ENCODE measurements at regions of chr3 and their contacts with region 1.

Region 1: GRCh38 chr3:32510075-32510724 is 7.5 kb upstream of the CMTM6 start:
- DNase-seq: peak; percentile 86
- H3K4me3 Mint-ChIP-seq: no peak overlapping the region
- H3K27ac Mint-ChIP-seq: no peak overlapping the region
- H3K4me1 Mint-ChIP-seq: peaks cover 2% of the 10 kb centered on the region
- H3K27me3 Mint-ChIP-seq: no peaks in the 10 kb centered on the region

Region 2: GRCh38 chr3:32570421-32571191 is 60.4 kb after region 1 on chr3 and contains the start of gene DYNC1LI1:
- CTCF ChIA-PET with region 1: interaction called, 6 read pairs
- intact Hi-C with region 1: loop called (anchors 2 kb)
- DNase-seq: peak; percentile 94
- H3K4me3 Mint-ChIP-seq: peak within 1 kb of the TSS; percentile 88
- H3K27ac Mint-ChIP-seq: peak within 1 kb of the TSS; percentile 88
- H3K4me1 Mint-ChIP-seq: peaks cover 19% of the 10 kb centered on the region
- H3K27me3 Mint-ChIP-seq: no peaks in the 10 kb centered on the region
- total RNA-seq, gene DYNC1LI1: 29.8 to 33.1 TPM

Region 3: GRCh38 chr3:32593903-32594525 is 83.8 kb after region 1 on chr3:
- CTCF ChIA-PET with region 1: no interaction called
- intact Hi-C with region 1: loop called (anchors 1 kb)
- DNase-seq: no peak
- H3K4me3 Mint-ChIP-seq: no peak overlapping the region
- H3K27ac Mint-ChIP-seq: no peak overlapping the region
- H3K4me1 Mint-ChIP-seq: no peaks in the 10 kb centered on the region
- H3K27me3 Mint-ChIP-seq: peaks cover 2% of the 10 kb centered on the region

Region 4: DNA sequence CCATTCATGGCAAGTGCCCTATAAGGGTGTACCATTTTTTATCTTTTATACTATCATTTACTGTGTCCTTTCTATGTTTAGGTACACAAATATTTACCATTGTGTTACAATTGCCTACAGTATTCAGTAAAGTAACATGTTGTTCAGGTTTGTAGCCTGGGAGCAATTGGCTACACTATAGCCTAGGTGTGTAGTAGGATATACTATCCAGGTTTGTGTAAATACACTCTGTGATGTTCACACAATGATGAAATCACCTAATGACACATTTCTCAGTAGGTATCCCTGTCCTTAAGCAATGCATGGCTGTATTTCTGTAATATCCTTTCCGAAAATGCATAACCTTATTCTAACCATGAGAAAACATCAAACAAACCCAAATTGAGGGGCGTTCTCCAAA is 156.9 kb after region 1 on chr3:
- CTCF ChIA-PET with region 1: interaction called, 12 read pairs
- intact Hi-C with region 1: loop called (anchors 1 kb)
- DNase-seq: no peak
- H3K4me3 Mint-ChIP-seq: no peak overlapping the region
- H3K27ac Mint-ChIP-seq: no peak overlapping the region
- H3K4me1 Mint-ChIP-seq: no peaks in the 10 kb centered on the region
- H3K27me3 Mint-ChIP-seq: no peaks in the 10 kb centered on the region

Region 5: DNA sequence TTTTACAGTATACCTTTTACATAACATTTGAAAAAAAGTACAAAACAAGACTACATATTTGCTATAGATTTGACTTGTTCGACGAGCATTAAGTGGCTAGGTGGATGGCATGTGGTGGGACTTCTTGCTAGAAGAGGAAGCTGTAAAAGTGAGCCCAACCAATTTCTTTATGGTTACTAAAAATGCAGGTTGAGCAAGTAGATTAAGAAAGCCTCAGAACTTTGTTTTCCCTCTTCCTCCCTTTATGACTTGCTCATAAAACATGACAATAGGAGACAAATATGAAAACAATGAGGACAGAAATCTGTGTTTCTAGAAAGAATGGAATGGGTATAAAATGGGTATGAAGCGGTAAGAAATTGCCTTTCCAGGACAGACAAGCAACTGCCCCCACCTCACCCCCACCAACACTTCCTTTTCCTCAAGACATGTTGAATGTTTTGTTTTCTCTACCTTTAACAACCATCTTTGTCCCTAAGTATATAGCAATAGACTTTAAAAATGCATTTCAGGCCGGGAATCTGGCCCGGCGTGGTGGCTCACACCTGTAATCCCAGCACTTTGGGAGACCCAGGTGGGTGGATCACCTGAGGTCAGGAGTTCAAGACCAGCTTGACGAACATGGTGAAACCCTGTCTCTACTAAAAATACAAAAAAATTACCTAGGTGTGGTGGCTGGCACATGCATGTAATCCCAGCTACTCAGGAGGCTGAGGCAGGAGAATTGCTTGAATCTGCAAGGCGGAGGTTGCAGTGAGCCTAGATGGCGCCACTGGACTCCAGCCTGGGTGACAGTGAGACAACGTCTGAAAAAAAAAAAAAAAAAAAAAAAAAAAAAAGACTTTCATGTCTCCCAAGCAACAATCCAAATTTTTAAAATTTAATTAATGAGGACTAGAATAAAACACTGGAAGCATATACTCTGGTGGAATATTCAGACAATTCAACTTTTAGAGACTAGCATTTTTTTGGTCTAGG is 391.5 kb after region 1 on chr3:
- CTCF ChIA-PET with region 1: no interaction called
- intact Hi-C with region 1: loop called (anchors 2 kb)
- DNase-seq: peak; percentile 66
- H3K4me3 Mint-ChIP-seq: peak overlapping the region; percentile 43
- H3K27ac Mint-ChIP-seq: no peak overlapping the region
- H3K4me1 Mint-ChIP-seq: peaks cover 2% of the 10 kb centered on the region
- H3K27me3 Mint-ChIP-seq: peaks cover 3% of the 10 kb centered on the region

Region 6: DNA sequence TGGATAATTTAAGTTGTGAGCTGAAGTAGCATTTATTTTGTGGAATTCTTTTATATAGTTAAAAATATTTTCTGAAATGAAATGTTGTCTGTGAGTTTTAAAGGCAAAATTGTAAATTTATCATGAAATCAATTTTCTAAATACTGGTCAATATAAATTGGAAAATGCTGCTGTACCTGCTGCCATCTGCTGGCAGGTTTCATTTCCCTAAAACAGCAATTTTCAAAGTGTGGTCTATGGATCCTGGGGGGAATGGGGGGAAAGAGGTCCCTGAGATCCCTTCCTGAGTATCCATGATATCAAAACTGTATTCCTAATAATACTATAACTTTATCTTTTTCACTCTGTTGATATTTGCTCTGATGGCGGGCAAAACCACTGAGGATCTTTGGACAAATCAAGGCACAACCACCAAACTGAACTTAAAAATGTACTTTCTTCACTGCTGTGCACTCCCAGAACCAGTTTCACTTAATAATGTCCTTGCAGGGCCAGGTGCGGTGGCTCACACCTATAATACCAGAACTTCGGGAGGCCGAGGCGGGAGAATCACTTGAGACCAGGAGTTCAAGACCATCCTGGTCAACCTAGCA is 424.0 kb after region 1 on chr3:
- CTCF ChIA-PET with region 1: interaction called, 3 read pairs
- intact Hi-C with region 1: loop called (anchors 1 kb)
- DNase-seq: peak; percentile 52
- H3K4me3 Mint-ChIP-seq: no peak overlapping the region
- H3K27ac Mint-ChIP-seq: no peak overlapping the region
- H3K4me1 Mint-ChIP-seq: no peaks in the 10 kb centered on the region
- H3K27me3 Mint-ChIP-seq: peaks cover 4% of the 10 kb centered on the region

Measured in activated naive CD4-positive, alpha-beta T cell treated with anti-CD3 and anti-CD28 coated beads for 36 hours (primary cell).